ENCODE measurements at regions of chr6 and their contacts with region 1.

Region 1: DNA sequence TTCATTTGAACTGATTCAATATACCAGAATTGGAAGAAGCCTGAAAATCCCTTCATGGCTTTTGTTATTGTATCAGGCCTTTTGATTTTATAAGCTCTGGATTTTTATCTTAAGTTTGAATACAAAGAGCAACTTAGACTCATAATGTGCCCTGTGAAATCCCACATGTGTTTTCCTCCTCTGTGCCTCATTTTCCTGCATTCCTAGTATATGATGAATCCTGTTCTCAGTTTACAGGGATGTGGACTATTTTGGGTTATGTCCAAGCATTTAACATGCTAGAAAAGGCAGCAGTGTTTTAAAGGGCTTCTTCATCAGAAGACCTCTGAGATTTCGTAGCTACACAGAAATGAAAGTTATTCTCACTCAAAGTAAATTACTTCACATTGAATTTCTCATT is 455.0 kb downstream of the RFPL4B start:
- DNase-seq: peak; percentile 7
- H3K4me3 ChIP-seq: no peak overlapping the region
- H3K27ac ChIP-seq: no peak overlapping the region
- H3K4me1 ChIP-seq: no peaks in the 10 kb centered on the region
- H3K27me3 ChIP-seq: no peaks in the 10 kb centered on the region
- CTCF ChIP-seq: no peak

Region 2: GRCh38 chr6:112846681-112847080 is 44.5 kb after region 1 on chr6:
- CTCF ChIA-PET with region 1: no interaction called
- POLR2A ChIA-PET with region 1: no interaction called
- intact Hi-C with region 1: no loop called
- DNase-seq: no peak
- H3K4me3 ChIP-seq: no peak overlapping the region
- H3K27ac ChIP-seq: no peak overlapping the region
- H3K4me1 ChIP-seq: peaks cover 15% of the 10 kb centered on the region
- H3K27me3 ChIP-seq: no peaks in the 10 kb centered on the region
- CTCF ChIP-seq: no peak

Region 3: GRCh38 chr6:113755449-113756289 is 953.5 kb after region 1 on chr6:
- CTCF ChIA-PET with region 1: no interaction called
- POLR2A ChIA-PET with region 1: interaction called, 13 read pairs
- intact Hi-C with region 1: no loop called
- DNase-seq: peak; percentile 58
- H3K4me3 ChIP-seq: no peak overlapping the region
- H3K27ac ChIP-seq: peak overlapping the region; percentile 31
- H3K4me1 ChIP-seq: peaks cover 5% of the 10 kb centered on the region
- H3K27me3 ChIP-seq: no peaks in the 10 kb centered on the region
- CTCF ChIP-seq: no peak

Measured in A673 (cell line).